Dorsolateral prefrontal cortex (tissue), 120 donors: ENCODE measurements at regions of chr16 and their contacts with region 1.

Region 1: DNA sequence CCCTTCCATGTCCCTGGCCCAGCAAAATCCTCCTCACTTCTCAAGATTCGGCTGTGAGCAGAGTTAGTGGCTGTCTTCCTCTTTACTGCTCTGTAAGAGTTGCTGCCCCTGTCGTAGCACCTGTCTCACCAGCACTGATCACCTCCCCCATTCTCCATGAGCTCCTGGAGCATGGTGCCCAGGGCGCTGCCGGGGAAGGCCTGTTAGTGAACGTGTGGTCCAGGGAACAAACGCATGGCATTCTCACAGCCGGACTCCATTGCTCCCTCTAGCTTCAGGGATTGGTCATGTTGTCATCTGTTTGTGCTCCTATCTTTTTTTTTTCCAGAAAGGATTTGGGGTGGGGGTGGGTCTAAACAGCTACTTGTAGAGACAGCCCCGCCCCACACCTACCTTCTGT is 141.2 kb downstream of the CMIP start:
- DNase-seq: no peak
- H3K4me3 ChIP-seq: no peak overlapping the region
- H3K27ac ChIP-seq: no peak overlapping the region
- H3K27me3 ChIP-seq: no peaks in the 10 kb centered on the region
- CTCF ChIP-seq: peak in 36 of 56 donors; percentile 12 to 43 (median 28)

Region 2: DNA sequence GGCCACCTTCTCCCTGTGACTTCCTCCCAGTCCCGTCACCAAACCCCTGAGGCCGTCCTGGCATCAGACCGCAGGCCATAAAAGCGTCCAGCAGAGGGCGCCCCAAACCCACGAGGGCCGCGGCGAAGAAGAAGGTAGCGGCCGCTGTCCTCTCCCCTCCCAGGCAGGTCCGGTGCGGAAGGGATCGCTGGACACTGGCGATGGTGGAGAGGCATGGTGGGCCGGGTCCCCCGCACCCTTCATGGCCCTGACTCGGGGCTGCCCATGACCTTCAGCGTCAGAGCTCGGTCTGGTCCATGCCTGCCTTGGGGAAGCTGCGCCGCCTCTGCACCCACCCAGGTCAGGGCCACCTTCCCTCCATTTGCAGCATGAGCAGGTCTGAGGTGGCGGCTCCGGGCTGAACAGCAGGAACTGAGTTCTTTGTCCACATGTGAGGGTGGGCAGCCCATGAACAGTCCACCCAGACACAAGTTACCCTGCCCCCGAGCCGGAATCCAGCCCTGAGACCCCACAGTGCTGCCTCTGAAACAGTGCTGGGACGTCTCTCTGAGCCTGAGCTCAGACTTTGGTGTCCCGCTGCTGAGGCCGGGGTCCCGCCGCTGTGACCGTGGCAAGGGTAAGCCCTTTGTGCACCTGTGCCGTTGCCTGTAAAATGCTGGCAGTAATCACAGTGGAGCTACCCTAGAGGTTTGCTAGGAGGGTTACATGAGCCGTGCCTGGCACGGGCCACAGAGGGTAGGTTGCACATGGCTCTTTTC is 182.0 kb before region 1 on chr16:
- intact Hi-C with region 1: loop called in 1 of 2 experiments (anchors 10 kb)
- DNase-seq: peak; percentile 74 to 88 (median 80)
- H3K4me3 ChIP-seq: peak overlapping the region in 58 of 59 donors; percentile 1 to 67 (median 49)
- H3K27ac ChIP-seq: peak overlapping the region in 1 of 59 donors; percentile 48
- H3K27me3 ChIP-seq: peaks cover 0 to 2% (median 0%) of the 10 kb centered on the region in 45 donors
- CTCF ChIP-seq: peak; percentile 74 to 99 (median 97)

Region 3: GRCh38 chr16:81444448-81445121 is 141.2 kb before region 1 on chr16 and contains the start of gene CMIP:
- intact Hi-C with region 1: loop called in 1 of 2 experiments (anchors 5 kb)
- DNase-seq: peak; percentile 58 to 89 (median 72)
- H3K4me3 ChIP-seq: peak within 1 kb of the TSS; percentile 57 to 90 (median 79)
- H3K27ac ChIP-seq: peak within 1 kb of the TSS; percentile 27 to 94 (median 82)
- H3K27me3 ChIP-seq: no peaks in the 10 kb centered on the region
- CTCF ChIP-seq: no peak
- total RNA-seq, gene CMIP: 104 to 216 (median 159) TPM

Region 4: GRCh38 chr16:81493755-81494433 is 91.9 kb before region 1 on chr16:
- intact Hi-C with region 1: no loop called
- DNase-seq: no peak
- H3K4me3 ChIP-seq: no peak overlapping the region
- H3K27ac ChIP-seq: peak overlapping the region in 19 of 59 donors; percentile 11 to 67 (median 41)
- H3K27me3 ChIP-seq: no peaks in the 10 kb centered on the region
- CTCF ChIP-seq: no peak

Region 5: GRCh38 chr16:81616321-81617055 is 30.7 kb after region 1 on chr16:
- intact Hi-C with region 1: loop called in 1 of 2 experiments (anchors 2 kb)
- DNase-seq: peak in 8 of 10 donors; percentile 46 to 78 (median 66)
- H3K4me3 ChIP-seq: peak overlapping the region in 1 of 59 donors; percentile 12
- H3K27ac ChIP-seq: peak overlapping the region in 48 of 59 donors; percentile 0 to 89 (median 63)
- H3K27me3 ChIP-seq: no peaks in the 10 kb centered on the region
- CTCF ChIP-seq: no peak

Region 6: GRCh38 chr16:81774348-81774747 is 188.6 kb after region 1 on chr16:
- intact Hi-C with region 1: no loop called
- DNase-seq: no peak
- H3K4me3 ChIP-seq: no peak overlapping the region
- H3K27ac ChIP-seq: peak overlapping the region in 1 of 59 donors; percentile 4
- H3K27me3 ChIP-seq: peaks cover 0 to 25% (median 9%) of the 10 kb centered on the region in 45 donors
- CTCF ChIP-seq: no peak